Left cardiac atrium (tissue), 4 donors: ENCODE measurements at regions of chr16 and their contacts with region 1.

Region 1: DNA sequence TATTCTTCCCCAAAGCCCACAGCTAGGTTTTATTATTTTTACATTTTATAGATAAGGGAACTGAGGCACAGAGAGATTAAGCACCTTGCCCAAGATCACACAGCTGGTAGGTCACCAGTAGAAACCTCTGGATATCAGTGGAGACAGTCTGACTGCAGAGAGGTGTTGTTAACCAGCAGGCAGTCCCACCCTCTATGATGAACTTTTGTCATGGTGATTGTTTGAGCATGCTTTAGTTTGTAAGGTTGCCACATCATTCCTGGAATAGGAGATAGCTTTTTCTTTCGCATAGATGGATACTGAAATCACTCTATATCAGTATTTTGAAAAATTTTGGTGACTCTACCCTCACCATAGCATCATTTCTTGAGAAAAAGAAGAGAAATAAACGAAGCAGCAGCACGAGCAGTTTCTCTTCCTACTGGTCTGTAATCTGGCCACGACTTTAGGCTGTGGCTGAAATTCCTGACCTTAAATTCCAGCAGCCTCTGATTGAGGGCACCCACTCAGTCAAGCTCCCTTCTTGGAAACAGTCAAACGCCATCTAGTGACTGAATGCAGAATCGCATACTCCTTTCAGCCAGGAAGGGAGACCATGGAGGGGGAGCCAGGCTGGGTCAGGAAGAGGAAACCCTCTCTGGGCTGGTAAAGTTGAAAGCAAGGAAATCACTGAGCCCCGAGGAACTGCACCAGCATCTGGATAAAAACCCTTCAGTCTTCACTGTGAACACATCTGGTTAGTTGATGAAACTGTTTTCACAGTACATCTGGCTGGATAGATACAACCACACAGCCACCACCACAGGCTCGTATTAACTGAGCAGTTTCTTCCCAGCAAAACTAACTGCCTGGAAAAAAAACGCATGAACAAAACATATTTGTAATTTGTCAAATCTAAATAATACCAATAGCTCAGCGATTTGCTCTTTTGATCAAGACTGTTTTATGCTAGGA is 108.4 kb upstream of the XYLT1 start:
- DNase-seq: peak; percentile 45
- ATAC-seq: peak; percentile 82 to 91

Region 2: GRCh38 chr16:16861546-16861945 is 717.7 kb before region 1 on chr16:
- intact Hi-C with region 1: loop called (anchors 10 kb)
- DNase-seq: peak; percentile 32
- ATAC-seq: peak in 1 of 2 donors; percentile 36

Region 3: DNA sequence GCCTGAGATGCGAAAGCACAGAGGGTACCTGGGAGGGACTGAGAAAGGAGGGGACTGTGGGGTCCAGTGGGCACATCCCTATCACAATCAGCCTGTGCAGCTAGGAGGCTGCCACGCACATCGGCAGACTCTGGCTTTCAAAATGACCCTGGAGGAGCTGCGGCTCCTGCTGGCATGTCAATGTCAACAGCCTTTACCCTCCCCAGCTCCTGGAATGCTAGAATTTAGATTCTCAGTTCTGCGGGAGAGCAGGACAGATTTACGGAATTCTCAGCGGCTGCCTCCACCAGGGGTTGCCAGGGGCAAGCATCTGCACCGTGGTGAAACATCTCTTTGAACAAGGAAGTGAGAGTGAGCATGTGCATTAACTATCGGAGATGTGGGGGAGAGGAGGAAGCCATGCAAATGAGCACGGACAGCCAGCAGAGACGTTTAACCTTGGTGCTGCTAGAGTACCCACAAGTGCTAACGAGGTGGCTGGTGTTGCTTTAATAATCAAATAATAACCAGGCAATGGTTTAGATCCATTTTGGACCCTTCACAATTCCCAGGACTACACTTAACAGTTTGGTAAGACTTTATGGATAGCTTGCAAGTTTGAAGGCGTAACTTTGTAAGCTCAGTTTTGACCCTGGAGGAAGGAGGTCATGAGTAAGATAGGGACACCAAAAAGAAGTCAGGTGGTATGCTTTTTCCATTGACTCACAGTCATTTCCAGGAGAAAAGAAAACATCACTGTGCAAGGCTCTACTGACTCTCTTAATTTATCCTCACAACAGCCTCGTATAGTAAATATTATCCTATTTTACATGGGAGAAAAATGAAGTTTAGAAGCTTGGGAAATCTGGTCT is 162.5 kb before region 1 on chr16:
- intact Hi-C with region 1: no loop called
- DNase-seq: peak; percentile 31
- ATAC-seq: peak; percentile 70 to 83

Region 4: GRCh38 chr16:17476414-17477270 is 102.6 kb before region 1 on chr16:
- intact Hi-C with region 1: loop called in 1 of 2 experiments (anchors 5 kb)
- DNase-seq: no peak
- ATAC-seq: peak; percentile 68 to 70